ENCODE measurements at regions of chr6 and their contacts with region 1.

Region 1: GRCh38 chr6:70566751-70567382 is at the start of gene SDHAF4:
- DNase-seq: no peak
- H3K4me3 Mint-ChIP-seq: peak within 1 kb of the TSS; percentile 88
- H3K27ac Mint-ChIP-seq: peak within 1 kb of the TSS; percentile 90
- H3K4me1 Mint-ChIP-seq: peaks cover 11% of the 10 kb centered on the region
- H3K27me3 Mint-ChIP-seq: no peaks in the 10 kb centered on the region
- total RNA-seq, gene SDHAF4: 9.5 and 14.3 TPM in 2 replicates

Region 2: DNA sequence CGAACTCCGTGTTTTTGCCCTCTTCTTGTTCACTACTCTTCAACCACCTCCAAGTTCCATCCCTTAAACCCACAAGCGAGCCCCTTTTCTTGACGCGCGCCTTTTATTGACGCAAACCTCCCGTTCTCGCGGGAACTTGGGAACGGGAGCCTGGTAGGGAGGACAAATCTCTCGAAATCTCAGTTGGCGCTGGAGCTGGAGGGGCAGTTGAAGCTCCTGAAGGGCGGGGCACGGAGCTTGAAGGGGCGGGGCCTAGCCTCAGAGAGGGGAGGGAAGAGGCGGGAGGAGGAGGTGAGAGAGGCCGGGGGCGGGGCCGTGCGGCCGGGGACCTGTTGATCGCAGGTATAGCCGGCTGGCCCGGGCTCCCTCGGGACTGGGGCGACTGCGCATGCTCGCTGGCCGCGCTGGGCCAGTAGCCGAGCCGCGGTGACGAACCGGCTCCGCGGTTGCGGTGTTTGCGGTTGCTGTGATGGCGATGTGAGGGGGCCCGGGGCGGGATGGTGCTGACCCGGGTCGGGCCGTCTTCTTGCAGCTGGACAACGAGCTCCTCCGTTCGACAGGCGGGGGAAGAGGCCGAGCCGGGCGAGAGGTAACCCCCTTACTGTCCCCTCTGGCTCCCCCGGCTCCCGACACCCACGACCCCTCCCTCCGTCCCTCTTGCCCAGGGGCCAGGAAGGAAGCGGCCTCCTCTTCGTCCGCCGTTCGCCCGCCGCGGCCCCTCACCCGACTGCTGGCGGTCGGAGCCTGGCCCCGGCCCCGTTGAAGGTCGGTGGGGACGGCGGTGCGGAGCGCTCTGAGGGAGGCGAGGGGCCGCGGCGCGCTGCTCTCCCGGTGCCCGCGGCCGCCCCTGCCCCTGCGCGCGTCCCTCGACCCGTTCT is 153.5 kb before region 1 on chr6 and contains the start of gene FAM135A:
- intact Hi-C with region 1: loop called (anchors 5 kb)
- DNase-seq: peak; percentile 98
- H3K4me3 Mint-ChIP-seq: peak within 1 kb of the TSS; percentile 92
- H3K27ac Mint-ChIP-seq: peak within 1 kb of the TSS; percentile 87
- H3K4me1 Mint-ChIP-seq: peaks cover 27% of the 10 kb centered on the region
- H3K27me3 Mint-ChIP-seq: peaks cover 7% of the 10 kb centered on the region
- total RNA-seq, gene FAM135A: 7.7 and 10.5 TPM in 2 replicates

Region 3: GRCh38 chr6:70601014-70601413 is 34.1 kb after region 1 on chr6:
- intact Hi-C with region 1: loop called (anchors 5 kb)
- DNase-seq: no peak
- H3K4me3 Mint-ChIP-seq: no peak overlapping the region
- H3K27ac Mint-ChIP-seq: no peak overlapping the region
- H3K4me1 Mint-ChIP-seq: peaks cover 13% of the 10 kb centered on the region
- H3K27me3 Mint-ChIP-seq: no peaks in the 10 kb centered on the region

Measured in activated CD4-positive, alpha-beta T cell treated with anti-CD3 and anti-CD28 coated beads, Interleukin-2, amount 10 ng/mL, durations not matched to agents 24 days and 14 days (primary cell).